Tibial artery (tissue), 4 donors: ENCODE measurements at regions of chr1 and their contacts with region 1.

Region 1: DNA sequence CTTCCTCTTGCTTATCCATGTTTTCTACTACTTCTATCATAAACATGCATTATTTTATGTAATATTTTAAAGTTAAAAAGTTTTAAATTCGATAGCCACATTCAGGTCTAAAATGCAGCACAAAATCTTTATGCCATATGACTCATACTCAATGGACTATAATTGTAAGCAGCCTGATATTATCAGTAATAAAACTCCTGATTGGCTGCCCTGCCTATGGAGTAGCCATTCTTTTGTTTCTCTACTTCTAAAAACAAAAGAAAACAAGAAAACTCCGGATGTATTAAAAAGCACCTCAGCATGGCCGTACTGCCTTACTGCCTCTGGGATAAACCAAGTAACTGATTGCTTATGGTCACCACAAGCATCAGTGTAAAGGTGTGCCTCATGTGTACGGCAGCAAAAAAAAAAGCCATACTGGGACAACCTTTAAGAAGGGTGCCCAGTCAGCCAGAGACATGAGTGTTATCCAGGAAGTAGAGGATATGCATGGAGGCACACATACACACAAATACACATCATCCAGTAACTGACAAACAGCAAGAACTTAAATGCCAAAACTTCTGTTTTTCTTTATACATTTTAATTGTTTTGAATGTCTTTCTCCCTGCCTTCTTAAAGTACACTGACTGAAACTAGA is 9.2 kb downstream of the SLC35D1 start:
- DNase-seq: no peak
- H3K4me3 ChIP-seq: no peak overlapping the region
- H3K27ac ChIP-seq: no peak overlapping the region
- H3K4me1 ChIP-seq: peaks cover 0 to 26% (median 8%) of the 10 kb centered on the region in 4 donors
- H3K27me3 ChIP-seq: no peaks in the 10 kb centered on the region
- CTCF ChIP-seq: no peak

Region 2: DNA sequence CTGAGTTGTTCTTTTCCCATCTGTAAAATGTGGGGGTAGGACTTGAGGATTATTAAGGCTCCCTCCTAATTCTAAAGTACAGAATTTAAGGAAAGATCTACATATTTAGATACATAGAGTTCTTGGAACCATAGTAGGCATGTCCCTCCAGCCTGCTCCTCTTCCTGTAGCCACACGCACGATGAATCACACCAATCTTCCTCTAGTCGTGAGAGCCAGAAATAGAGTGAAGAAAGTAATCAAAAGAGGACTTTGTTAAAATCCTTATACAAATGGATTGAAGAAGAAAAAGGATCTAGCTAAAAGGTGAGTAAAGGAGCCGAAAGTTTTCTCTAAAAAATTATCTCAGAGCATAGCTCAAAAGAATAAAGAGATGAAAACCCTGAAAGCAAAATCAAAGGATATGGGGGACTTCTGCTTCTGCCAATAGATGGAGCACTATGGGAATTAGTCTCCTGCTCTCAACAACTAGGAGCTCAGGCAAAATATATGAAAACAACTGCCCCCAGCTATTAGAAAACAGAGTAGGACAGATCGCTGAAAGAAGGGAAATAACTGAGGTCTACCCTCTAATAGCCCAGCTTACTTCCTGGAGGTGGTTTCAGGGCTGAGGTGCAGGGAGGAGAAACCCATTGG is 81.5 kb after region 1 on chr1:
- intact Hi-C with region 1: no loop called
- DNase-seq: no peak
- H3K4me3 ChIP-seq: no peak overlapping the region
- H3K27ac ChIP-seq: no peak overlapping the region
- H3K4me1 ChIP-seq: no peaks in the 10 kb centered on the region
- H3K27me3 ChIP-seq: no peaks in the 10 kb centered on the region
- CTCF ChIP-seq: no peak

Region 3: DNA sequence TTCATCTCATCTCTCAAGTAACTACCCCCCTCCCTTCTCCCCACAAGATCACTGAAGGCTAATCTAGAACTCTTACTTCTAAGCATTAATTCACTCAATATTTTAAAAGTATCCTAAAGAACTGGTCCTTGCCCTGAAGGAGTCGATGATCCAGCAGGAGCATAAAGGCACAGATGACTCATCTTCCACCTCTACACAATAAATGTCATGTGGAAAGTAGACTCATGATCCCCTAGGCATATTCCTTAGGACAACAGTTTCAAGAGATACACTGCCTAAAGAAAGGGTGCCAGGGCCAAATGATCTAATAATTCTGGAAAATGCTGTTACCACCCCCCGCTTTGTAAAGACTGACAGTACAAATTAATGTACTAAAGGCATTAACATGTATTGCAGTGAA is 1091.4 kb after region 1 on chr1:
- intact Hi-C with region 1: loop called (anchors 5 kb)
- DNase-seq: no peak
- H3K4me3 ChIP-seq: no peak overlapping the region
- H3K27ac ChIP-seq: no peak overlapping the region
- H3K4me1 ChIP-seq: peaks cover 0 to 5% (median 3%) of the 10 kb centered on the region in 4 donors
- H3K27me3 ChIP-seq: no peaks in the 10 kb centered on the region
- CTCF ChIP-seq: no peak